Activated CD4-positive, alpha-beta T cell treated with anti-CD3 and anti-CD28 coated beads for 36 hours (primary cell): ENCODE measurements at regions of chr1 and their contacts with region 1.

Region 1: GRCh38 chr1:25088946-25089345 is 143.4 kb downstream of the SYF2 start:
- DNase-seq: no peak
- ATAC-seq: no peak
- H3K4me3 Mint-ChIP-seq: no peak overlapping the region
- H3K27ac Mint-ChIP-seq: no peak overlapping the region
- H3K4me1 Mint-ChIP-seq: no peaks in the 10 kb centered on the region
- H3K27me3 Mint-ChIP-seq: no peaks in the 10 kb centered on the region

Region 2: GRCh38 chr1:24735509-24736375 is 353.2 kb before region 1 on chr1:
- CTCF ChIA-PET with region 1: no interaction called
- POLR2A ChIA-PET with region 1: no interaction called
- intact Hi-C with region 1: no loop called
- DNase-seq: no peak
- ATAC-seq: no peak
- H3K4me3 Mint-ChIP-seq: no peak overlapping the region
- H3K27ac Mint-ChIP-seq: no peak overlapping the region
- H3K4me1 Mint-ChIP-seq: peaks cover 4% of the 10 kb centered on the region
- H3K27me3 Mint-ChIP-seq: no peaks in the 10 kb centered on the region

Region 3: GRCh38 chr1:25046194-25046532 is 42.8 kb before region 1 on chr1:
- CTCF ChIA-PET with region 1: no interaction called
- POLR2A ChIA-PET with region 1: no interaction called
- intact Hi-C with region 1: loop called in 1 of 2 experiments (anchors 5 kb)
- DNase-seq: no peak
- ATAC-seq: no peak
- H3K4me3 Mint-ChIP-seq: no peak overlapping the region
- H3K27ac Mint-ChIP-seq: no peak overlapping the region
- H3K4me1 Mint-ChIP-seq: no peaks in the 10 kb centered on the region
- H3K27me3 Mint-ChIP-seq: peaks cover 6% of the 10 kb centered on the region

Region 4: GRCh38 chr1:25128121-25128621 is 39.2 kb after region 1 on chr1:
- CTCF ChIA-PET with region 1: no interaction called
- POLR2A ChIA-PET with region 1: no interaction called
- intact Hi-C with region 1: no loop called
- DNase-seq: no peak
- ATAC-seq: peak; percentile 21
- H3K4me3 Mint-ChIP-seq: no peak overlapping the region
- H3K27ac Mint-ChIP-seq: no peak overlapping the region
- H3K4me1 Mint-ChIP-seq: peaks cover 6% of the 10 kb centered on the region
- H3K27me3 Mint-ChIP-seq: no peaks in the 10 kb centered on the region

Region 5: DNA sequence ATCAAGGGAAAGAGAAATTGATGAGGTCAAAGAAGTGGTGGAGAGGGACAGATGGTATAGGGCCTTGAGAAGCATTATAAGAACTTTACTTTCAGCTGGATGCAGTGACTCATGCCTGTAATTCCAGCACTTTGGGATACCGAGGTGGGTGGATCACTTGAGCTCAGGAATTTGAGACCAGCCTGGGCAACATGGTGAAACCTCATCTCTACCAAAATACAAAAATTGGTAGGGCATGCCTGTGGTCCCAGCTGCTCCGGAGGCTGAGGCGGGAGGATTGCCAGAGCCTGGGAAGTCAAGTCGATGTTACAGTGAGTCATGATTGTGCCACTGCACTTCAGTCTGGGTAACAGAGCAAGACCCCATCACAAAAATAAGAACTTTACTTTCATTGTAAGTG is 254.9 kb after region 1 on chr1:
- CTCF ChIA-PET with region 1: no interaction called
- POLR2A ChIA-PET with region 1: no interaction called
- intact Hi-C with region 1: no loop called
- DNase-seq: no peak
- ATAC-seq: no peak
- H3K4me3 Mint-ChIP-seq: no peak overlapping the region
- H3K27ac Mint-ChIP-seq: no peak overlapping the region
- H3K4me1 Mint-ChIP-seq: peaks cover 30% of the 10 kb centered on the region
- H3K27me3 Mint-ChIP-seq: no peaks in the 10 kb centered on the region